WTC11 (cell line): ENCODE measurements at regions of chr1 and their contacts with region 1.

Region 1: DNA sequence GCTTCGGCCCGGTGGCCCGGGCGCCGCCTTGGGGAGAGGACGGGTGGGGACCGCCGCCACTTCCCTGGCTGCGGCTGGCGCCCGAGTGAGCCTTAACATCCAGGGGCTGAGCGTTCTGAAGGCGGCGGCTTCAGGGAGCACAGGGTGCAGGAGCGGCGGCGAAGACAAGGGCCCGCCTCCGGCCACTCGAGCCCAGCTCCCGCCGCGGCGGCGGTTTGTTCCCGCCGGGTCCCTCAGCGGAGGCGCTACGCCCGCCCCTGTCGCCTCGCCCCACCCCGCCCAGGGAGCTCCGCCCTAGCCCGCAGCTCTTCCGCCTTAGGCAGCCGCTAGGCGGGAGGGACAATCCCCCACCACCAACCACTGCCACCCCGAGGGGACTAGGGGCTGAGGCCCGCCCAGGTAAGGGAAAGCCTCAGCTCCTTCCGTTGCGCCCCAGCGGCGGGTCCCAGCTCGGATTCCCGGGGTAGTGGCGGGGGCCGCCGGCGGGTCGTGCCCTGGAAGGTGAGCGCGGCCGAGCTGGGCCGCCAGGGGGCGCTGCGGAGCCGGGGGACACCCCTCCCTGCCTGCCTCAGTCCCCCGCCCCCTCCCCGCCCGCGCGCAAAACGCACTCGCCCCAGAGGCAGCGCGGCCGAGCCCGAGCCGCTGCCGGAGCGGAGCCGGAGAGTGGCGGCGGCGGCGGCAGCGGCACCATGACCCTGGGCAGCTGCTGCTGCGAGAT is at the start of gene FOXD2:
- DNase-seq: peak; percentile 95
- ATAC-seq: peak; percentile 57
- H3K4me3 Mint-ChIP-seq: peak within 1 kb of the TSS; percentile 74
- H3K27ac Mint-ChIP-seq: no peak within 1 kb of the TSS
- H3K4me1 Mint-ChIP-seq: peaks cover 34% of the 10 kb centered on the region
- H3K27me3 Mint-ChIP-seq: peaks cover 49% of the 10 kb centered on the region
- CTCF ChIP-seq: peak; percentile 99
- total RNA-seq, gene FOXD2: 0.05 to 0.07 TPM (median 0.05 TPM) in 3 replicates

Region 2: GRCh38 chr1:47031108-47031457 is 406.5 kb before region 1 on chr1:
- CTCF ChIA-PET with region 1: no interaction called
- POLR2A ChIA-PET with region 1: no interaction called
- DNase-seq: no peak
- ATAC-seq: no peak
- H3K4me3 Mint-ChIP-seq: no peak overlapping the region
- H3K27ac Mint-ChIP-seq: no peak overlapping the region
- H3K4me1 Mint-ChIP-seq: no peaks in the 10 kb centered on the region; the same call in none of the 2 replicates
- H3K27me3 Mint-ChIP-seq: peaks cover 14% of the 10 kb centered on the region
- CTCF ChIP-seq: no peak

Region 3: DNA sequence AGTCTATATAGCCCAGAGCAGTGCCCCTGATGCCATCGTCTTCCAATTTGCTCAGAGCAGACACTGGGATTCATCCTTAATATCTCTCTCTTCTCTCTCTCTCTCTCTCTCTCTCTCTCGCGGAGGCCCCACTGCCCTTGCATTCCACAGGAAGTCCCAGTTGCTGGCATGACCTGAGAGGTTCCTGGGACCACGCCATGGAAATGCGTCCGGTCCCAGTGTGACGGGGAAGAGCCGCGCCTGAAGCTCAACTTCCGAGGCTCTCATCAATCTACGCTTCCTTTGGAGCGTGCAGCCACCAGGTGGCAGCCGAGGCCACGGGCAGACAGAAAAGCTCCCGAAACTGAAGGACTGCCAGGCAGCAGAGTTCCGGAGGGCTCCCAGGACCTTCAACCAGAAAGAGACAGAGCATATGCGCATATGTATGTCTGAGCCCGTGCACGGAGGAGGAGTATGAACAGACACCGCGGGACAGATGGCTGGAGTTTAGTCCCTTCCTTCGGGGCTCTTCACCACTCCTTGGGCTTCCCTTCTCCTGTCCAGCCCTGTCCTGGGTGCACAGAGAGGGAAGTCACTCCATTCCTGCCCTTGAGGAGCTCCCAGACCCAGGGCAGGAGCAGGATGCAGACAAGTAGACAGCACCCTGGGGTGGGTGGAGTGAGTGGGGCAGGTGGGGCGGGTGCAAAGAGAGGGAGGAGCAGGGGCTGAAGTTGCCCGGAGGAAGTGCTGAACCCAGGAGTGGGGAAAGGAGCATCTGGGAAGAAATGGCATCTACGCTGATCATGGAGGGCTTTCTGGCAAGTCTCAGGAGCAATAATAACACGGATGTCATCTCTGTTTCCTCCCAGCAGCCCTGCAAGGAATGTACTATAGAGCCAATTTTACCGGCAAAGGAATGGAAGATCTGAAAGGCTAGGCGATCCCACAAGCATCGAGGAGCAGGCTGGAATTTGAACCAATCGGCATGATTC is 258.3 kb before region 1 on chr1:
- CTCF ChIA-PET with region 1: interaction called, 21 read pairs
- POLR2A ChIA-PET with region 1: no interaction called
- DNase-seq: peak; percentile 94
- ATAC-seq: peak; percentile 81
- H3K4me3 Mint-ChIP-seq: peak overlapping the region; percentile 79
- H3K27ac Mint-ChIP-seq: peak overlapping the region; percentile 76
- H3K4me1 Mint-ChIP-seq: peaks cover 22% of the 10 kb centered on the region
- H3K27me3 Mint-ChIP-seq: peaks cover 36% of the 10 kb centered on the region
- CTCF ChIP-seq: peak; percentile 62

Region 4: GRCh38 chr1:47257224-47257623 is 180.4 kb before region 1 on chr1:
- CTCF ChIA-PET with region 1: no interaction called
- POLR2A ChIA-PET with region 1: no interaction called
- DNase-seq: no peak
- ATAC-seq: no peak
- H3K4me3 Mint-ChIP-seq: no peak overlapping the region
- H3K27ac Mint-ChIP-seq: no peak overlapping the region
- H3K4me1 Mint-ChIP-seq: no peaks in the 10 kb centered on the region
- H3K27me3 Mint-ChIP-seq: no peaks in the 10 kb centered on the region
- CTCF ChIP-seq: no peak

Region 5: DNA sequence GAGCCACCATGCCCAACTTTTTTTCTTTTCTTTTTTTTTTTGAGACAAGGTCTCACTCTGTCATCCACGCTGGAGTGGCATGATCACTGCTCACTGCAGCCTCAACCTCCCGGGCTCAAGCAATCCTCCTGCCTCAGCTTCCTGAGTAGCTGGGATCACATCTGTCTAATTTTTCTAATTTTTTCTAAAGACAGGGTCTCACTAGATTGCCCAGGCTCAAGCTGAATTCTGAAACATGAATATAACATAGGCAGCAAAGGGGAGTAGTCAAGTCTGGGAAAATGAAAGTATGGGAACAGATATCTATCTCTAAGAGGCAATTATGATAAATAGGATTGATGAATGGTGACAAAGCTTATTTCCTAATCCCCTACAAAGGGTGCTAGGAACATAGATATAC is 111.3 kb before region 1 on chr1:
- CTCF ChIA-PET with region 1: no interaction called
- POLR2A ChIA-PET with region 1: no interaction called
- DNase-seq: no peak
- ATAC-seq: no peak
- H3K4me3 Mint-ChIP-seq: no peak overlapping the region
- H3K27ac Mint-ChIP-seq: no peak overlapping the region
- H3K4me1 Mint-ChIP-seq: no peaks in the 10 kb centered on the region
- H3K27me3 Mint-ChIP-seq: no peaks in the 10 kb centered on the region
- CTCF ChIP-seq: no peak

Region 6: DNA sequence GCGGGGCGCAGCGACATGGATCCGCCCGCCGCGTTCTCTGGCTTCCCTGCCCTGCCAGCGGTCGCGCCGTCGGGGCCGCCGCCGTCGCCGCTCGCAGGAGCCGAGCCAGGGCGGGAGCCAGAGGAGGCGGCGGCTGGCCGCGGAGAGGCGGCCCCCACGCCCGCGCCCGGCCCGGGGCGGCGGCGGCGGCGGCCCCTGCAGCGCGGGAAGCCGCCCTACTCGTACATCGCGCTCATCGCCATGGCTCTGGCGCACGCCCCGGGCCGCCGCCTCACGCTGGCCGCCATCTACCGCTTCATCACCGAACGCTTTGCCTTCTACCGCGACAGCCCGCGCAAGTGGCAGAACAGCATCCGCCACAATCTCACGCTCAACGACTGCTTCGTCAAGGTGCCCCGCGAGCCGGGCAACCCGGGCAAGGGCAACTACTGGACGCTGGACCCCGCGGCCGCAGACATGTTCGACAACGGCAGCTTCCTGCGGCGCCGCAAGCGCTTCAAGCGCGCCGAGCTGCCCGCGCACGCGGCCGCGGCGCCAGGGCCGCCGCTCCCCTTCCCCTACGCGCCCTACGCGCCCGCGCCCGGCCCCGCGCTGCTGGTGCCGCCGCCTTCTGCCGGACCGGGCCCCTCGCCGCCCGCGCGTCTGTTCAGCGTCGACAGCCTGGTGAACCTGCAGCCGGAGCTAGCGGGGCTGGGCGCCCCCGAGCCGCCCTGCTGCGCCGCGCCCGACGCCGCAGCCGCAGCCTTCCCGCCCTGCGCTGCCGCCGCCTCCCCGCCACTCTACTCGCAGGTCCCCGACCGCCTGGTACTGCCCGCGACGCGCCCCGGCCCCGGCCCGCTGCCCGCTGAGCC is 21.1 kb before region 1 on chr1:
- CTCF ChIA-PET with region 1: interaction called, 109 read pairs
- POLR2A ChIA-PET with region 1: no interaction called
- DNase-seq: no peak
- ATAC-seq: peak; percentile 46
- H3K4me3 Mint-ChIP-seq: peak overlapping the region; percentile 68
- H3K27ac Mint-ChIP-seq: no peak overlapping the region
- H3K4me1 Mint-ChIP-seq: peaks cover 8% of the 10 kb centered on the region
- H3K27me3 Mint-ChIP-seq: peaks cover 83% of the 10 kb centered on the region
- CTCF ChIP-seq: no peak

Region 7: GRCh38 chr1:47459253-47459788 is 21.7 kb after region 1 on chr1:
- CTCF ChIA-PET with region 1: interaction called, 11 read pairs
- POLR2A ChIA-PET with region 1: no interaction called
- DNase-seq: no peak
- ATAC-seq: peak; percentile 71
- H3K4me3 Mint-ChIP-seq: no peak overlapping the region
- H3K27ac Mint-ChIP-seq: no peak overlapping the region
- H3K4me1 Mint-ChIP-seq: peaks cover 31% of the 10 kb centered on the region
- H3K27me3 Mint-ChIP-seq: peaks cover 47% of the 10 kb centered on the region
- CTCF ChIP-seq: no peak

Region 8: DNA sequence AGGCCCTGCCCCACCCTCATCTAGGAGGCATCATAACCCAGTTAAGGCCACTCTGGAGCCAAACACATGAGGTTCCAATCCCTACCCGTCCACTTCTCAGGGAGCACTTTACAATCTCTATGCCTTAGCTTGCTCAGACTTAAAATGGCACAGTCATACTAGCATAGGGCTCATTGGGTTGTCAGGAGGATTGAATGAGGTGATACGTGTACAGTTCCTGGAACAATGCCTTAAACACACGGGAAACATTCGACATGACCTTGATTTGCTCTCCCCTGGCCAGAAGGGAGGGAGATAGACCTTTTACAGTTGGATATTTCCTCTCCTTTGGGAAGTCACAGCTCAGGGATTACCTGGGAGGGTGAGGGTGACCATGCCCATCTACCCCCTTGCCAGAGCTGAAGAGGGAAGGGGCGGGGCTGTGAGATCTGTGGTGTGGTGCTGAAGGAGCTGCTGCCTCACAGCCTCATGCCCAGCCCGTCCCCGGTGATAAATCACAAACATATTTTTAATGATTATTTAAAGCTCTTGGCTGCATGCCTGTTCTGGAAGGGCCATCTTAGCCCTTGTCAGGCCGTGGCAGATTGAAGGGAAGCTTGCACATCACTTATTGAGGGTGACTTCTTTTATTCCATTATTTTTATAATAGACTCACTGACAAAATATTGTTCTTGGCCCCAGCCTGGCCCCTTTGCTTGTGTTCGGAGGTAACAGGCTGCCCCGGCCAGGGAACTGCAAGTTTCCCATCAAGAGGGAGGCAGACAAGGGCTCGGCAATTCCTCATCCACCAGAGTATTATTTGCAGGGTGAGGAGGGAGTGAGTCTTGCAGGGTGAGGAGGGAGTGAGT is 83.7 kb after region 1 on chr1:
- CTCF ChIA-PET with region 1: interaction called, 52 read pairs
- POLR2A ChIA-PET with region 1: no interaction called
- DNase-seq: no peak
- ATAC-seq: no peak
- H3K4me3 Mint-ChIP-seq: no peak overlapping the region
- H3K27ac Mint-ChIP-seq: no peak overlapping the region
- H3K4me1 Mint-ChIP-seq: peaks cover 32% of the 10 kb centered on the region
- H3K27me3 Mint-ChIP-seq: peaks cover 39% of the 10 kb centered on the region
- CTCF ChIP-seq: no peak

Region 9: DNA sequence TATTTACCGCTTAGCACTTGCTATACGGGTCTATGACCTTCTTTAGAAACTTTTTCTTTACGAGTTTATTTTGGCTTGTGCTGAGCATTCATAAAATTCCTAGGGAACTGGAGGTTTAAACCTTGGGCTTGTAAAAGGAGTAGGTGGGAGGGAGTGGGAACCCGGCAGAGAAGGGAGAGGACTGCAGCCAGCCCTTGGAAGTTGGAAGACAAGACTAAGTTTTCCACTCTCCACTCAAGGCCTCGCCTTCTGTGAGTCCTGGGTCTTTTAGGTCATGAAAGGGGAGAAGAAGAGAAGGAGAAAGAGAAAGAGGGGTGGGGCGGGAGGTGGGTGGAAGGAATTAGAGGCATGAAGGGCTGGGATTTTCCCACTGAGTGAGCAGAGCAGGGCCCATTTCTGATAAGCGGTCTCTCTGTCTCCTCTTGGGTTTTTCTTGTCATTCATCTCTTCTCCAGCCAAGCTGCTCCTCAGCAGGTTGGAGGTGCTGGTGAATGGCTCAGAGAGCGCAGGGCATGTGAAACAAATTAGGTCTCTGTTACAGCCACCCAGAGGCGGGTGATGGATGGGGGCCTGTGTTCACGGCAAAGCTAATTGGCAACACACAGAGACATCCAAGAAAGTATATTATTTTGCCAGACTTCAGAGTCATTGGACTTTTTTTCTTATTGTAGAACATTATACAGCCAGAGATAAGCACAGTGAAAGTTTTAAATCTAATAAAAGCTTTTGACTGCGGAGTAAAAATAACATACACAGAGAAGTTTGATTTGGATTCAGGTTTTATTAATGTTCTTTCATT is 247.6 kb after region 1 on chr1:
- CTCF ChIA-PET with region 1: interaction called, 19 read pairs
- POLR2A ChIA-PET with region 1: no interaction called
- DNase-seq: no peak
- ATAC-seq: no peak
- H3K4me3 Mint-ChIP-seq: no peak overlapping the region
- H3K27ac Mint-ChIP-seq: no peak overlapping the region
- H3K4me1 Mint-ChIP-seq: peaks cover 38% of the 10 kb centered on the region
- H3K27me3 Mint-ChIP-seq: no peaks in the 10 kb centered on the region; the same call in 1 of the 2 replicates
- CTCF ChIP-seq: no peak

Region 10: GRCh38 chr1:47720111-47720510 is 282.5 kb after region 1 on chr1:
- CTCF ChIA-PET with region 1: interaction called, 133 read pairs
- POLR2A ChIA-PET with region 1: no interaction called
- DNase-seq: no peak
- ATAC-seq: no peak
- H3K4me3 Mint-ChIP-seq: no peak overlapping the region
- H3K27ac Mint-ChIP-seq: no peak overlapping the region
- H3K4me1 Mint-ChIP-seq: peaks cover 20% of the 10 kb centered on the region
- H3K27me3 Mint-ChIP-seq: peaks cover 78% of the 10 kb centered on the region
- CTCF ChIP-seq: no peak